Activated T-helper 1 cell treated with anti-CD3 and anti-CD28 coated beads, Interleukin-12 subunit alpha, Interleukin-12 subunit beta, Interleukin-2, Interleukin-4 antibody, amounts not matched to agents 30 ng/mL and 10 ng/mL and 1 ng/mL, durations not matched to agents 14 hours and 24 hours and 36 hours (primary cell): ENCODE measurements at regions of chr16 and their contacts with region 1.

Region 1: GRCh38 chr16:84548971-84549844 is 44.7 kb upstream of the MEAK7 start:
- DNase-seq: peak; percentile 30
- H3K4me3 Mint-ChIP-seq: peak overlapping the region; percentile 87
- H3K27ac Mint-ChIP-seq: peak overlapping the region; percentile 96
- H3K4me1 Mint-ChIP-seq: peaks cover 72% of the 10 kb centered on the region
- H3K27me3 Mint-ChIP-seq: no peaks in the 10 kb centered on the region

Region 2: DNA sequence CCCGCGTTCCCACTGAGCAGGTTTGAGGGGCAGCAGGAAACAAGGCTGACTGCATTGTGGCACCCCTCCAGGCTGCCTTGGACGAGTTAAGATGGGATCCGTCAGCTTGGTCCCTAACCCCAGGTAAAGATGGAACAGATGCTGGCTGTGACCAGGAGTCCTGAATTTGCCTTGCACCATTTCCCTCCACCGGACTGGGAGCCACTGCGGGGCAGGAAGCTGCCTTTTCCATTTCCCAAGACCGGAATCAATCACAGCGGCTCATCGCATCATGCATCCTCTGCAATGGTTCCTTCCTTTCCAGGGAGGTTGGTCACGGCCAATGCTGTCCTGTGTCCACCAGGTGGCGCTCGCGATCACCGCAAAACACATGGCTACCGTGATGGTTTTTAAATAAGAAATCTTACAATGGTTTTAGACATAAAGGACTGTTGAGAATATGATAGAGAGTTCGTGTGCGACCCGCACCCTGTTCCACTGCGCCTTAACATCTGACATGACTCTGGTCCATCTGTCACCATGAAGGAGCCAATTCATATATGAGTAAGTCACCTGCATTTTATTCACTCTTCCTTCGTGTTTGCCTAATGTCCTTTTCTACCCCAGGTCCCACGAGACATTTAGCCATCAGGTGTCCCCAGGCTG is 37.9 kb before region 1 on chr16:
- intact Hi-C with region 1: loop called (anchors 1 kb)
- DNase-seq: peak; percentile 73
- H3K4me3 Mint-ChIP-seq: peak overlapping the region; percentile 38
- H3K27ac Mint-ChIP-seq: peak overlapping the region; percentile 49
- H3K4me1 Mint-ChIP-seq: peaks cover 72% of the 10 kb centered on the region
- H3K27me3 Mint-ChIP-seq: no peaks in the 10 kb centered on the region

Region 3: DNA sequence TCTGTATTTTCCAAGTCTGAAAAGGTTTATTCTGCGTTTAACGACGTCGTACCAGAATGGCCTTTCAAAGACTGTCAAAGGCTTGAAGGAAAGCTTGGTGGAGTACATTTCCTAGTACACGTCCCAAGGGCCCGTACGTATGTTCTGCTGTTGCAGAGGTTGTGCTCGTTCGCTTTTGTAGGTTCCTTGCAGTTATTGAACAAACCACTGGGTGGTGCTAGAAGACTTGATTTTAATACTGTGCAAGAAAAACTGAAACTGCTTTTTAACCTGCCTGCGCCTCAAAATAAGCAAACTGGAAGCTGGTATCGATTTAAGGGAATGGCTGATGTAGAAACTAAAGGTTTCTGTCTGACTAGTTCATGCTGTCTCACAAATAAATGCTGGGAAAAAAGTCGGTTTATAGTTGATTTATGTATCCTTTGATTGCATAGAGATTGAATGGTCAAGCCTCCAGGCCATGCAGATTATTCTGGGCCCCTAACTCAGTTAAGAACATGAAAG is 205.2 kb after region 1 on chr16:
- intact Hi-C with region 1: no loop called
- DNase-seq: peak; percentile 67
- H3K4me3 Mint-ChIP-seq: peak overlapping the region; percentile 60
- H3K27ac Mint-ChIP-seq: no peak overlapping the region
- H3K4me1 Mint-ChIP-seq: peaks cover 76% of the 10 kb centered on the region
- H3K27me3 Mint-ChIP-seq: no peaks in the 10 kb centered on the region